ENCODE measurements at regions of chr20 and their contacts with region 1.

Region 1: DNA sequence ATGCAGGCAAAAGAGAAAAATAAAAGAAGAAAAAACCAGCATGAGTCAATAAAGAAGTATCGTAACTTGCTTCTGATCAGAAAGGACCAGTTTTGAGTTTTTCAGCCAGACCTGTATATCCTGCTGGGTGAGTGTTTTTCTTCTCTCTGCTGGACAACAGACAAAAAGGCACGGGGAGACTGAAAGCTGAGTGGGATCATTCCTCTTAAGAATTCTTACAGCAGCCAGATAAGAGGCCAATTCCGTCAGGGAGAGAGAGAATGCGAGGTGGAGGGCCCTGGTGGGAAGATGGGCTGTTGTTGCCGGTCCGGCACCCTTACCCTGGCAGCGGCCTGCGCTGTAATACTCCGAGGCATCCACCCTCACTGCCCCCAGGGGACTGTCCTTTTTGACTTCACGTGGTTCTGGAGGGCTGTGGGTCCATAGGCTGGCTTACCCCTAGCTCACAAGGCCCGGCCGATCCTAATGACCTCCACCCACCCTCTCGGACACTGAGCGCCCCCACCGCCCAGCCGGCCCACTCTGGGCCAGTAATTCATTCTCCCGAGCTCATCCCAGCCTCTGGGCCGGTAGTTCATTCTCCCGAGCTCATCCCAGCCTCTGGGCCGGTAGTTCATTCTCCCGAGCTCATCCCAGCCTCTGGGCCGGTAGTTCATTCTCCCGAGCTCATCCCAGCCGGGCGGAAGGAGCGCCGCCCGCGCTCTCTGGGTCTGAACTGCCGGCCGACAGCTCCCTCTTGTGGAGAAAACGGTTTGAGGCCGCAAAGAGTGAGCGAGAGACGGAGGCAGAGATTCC is 118.3 kb upstream of the SIRPA start:
- DNase-seq: peak; percentile 13
- ATAC-seq: peak; percentile 97
- H3K4me3 ChIP-seq: peak overlapping the region; percentile 69; the same call in 1 of the 2 replicates
- H3K27ac ChIP-seq: no peak overlapping the region
- H3K4me1 ChIP-seq: no peaks in the 10 kb centered on the region
- H3K27me3 ChIP-seq: peaks cover 0 to 2% of the 10 kb centered on the region in 2 experiments; a peak in 1 of 4 replicates
- CTCF ChIP-seq: peak; percentile 71 to 80 (median 74)
- EP300 ChIP-seq: no peak
- POLR2A ChIP-seq: no peak
- RAD21 ChIP-seq: peak; percentile 87

Region 2: GRCh38 chr20:1503564-1504227 is 273.2 kb before region 1 on chr20:
- CTCF ChIA-PET with region 1: interaction called, 66 read pairs
- POLR2A ChIA-PET with region 1: interaction called, 3 read pairs
- RAD21 ChIA-PET with region 1: interaction called, 38 read pairs
- SMC1A ChIA-PET with region 1: interaction called, 22 read pairs
- in situ Hi-C with region 1: no loop called
- intact Hi-C with region 1: no loop called
- DNase-seq: peak; percentile 76
- ATAC-seq: peak; percentile 100
- H3K4me3 ChIP-seq: no peak overlapping the region
- H3K27ac ChIP-seq: no peak overlapping the region
- H3K4me1 ChIP-seq: no peaks in the 10 kb centered on the region
- H3K27me3 ChIP-seq: peaks cover 0 to 7% of the 10 kb centered on the region in 2 experiments; a peak in 1 of 4 replicates
- CTCF ChIP-seq: peak; percentile 98 to 100 (median 100); a peak in 5 of 6 replicates
- EP300 ChIP-seq: no peak
- POLR2A ChIP-seq: no peak
- RAD21 ChIP-seq: peak; percentile 86

Region 3: DNA sequence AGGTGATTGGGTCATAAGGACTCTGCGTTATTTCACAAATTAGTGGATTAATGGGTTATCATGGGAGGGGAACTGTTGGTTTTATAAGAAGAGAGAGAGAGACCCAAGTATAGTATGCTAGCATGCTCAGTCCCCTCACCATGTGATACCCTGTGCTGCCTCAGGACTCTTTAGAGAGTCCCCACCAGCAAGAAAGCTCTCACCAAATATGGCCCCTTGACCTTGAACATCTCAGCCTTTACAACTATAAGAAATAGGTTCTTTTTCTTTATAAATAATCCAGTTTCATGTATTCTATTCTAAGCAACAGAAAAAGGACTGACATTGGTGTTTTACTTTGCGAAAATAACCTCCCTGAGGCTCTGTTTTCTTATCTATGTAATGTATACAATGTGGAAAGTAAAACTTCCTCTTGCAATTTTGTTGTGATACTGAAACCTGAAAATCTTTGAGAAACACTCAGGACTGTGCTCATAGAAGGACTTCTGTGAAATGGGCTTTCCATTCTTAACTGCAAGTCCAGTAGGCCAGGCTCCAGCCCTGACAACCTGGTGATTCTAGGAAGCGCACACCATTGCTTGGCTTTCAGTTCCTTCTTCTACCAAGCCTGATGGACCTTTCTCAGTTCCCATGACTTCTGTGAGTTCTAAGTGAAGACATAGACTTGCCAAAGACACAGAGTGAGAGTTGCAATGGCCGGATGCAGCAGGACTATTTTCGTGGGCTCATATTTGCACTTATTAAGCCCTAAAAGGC is 241.3 kb before region 1 on chr20:
- CTCF ChIA-PET with region 1: interaction called, 23 read pairs
- POLR2A ChIA-PET with region 1: no interaction called
- RAD21 ChIA-PET with region 1: interaction called, 12 read pairs
- SMC1A ChIA-PET with region 1: interaction called, 17 read pairs
- in situ Hi-C with region 1: no loop called
- intact Hi-C with region 1: no loop called
- DNase-seq: peak; percentile 96
- ATAC-seq: peak; percentile 87
- H3K4me3 ChIP-seq: no peak overlapping the region
- H3K27ac ChIP-seq: peak overlapping the region; percentile 40
- H3K4me1 ChIP-seq: peaks cover 38% of the 10 kb centered on the region
- H3K27me3 ChIP-seq: peaks cover 0 to 1% of the 10 kb centered on the region in 2 experiments; a peak in 1 of 4 replicates
- CTCF ChIP-seq: no peak
- EP300 ChIP-seq: peak in 1 of 2 experiments; percentile 86; a peak in 2 of 4 replicates
- POLR2A ChIP-seq: no peak
- RAD21 ChIP-seq: no peak

Region 4: DNA sequence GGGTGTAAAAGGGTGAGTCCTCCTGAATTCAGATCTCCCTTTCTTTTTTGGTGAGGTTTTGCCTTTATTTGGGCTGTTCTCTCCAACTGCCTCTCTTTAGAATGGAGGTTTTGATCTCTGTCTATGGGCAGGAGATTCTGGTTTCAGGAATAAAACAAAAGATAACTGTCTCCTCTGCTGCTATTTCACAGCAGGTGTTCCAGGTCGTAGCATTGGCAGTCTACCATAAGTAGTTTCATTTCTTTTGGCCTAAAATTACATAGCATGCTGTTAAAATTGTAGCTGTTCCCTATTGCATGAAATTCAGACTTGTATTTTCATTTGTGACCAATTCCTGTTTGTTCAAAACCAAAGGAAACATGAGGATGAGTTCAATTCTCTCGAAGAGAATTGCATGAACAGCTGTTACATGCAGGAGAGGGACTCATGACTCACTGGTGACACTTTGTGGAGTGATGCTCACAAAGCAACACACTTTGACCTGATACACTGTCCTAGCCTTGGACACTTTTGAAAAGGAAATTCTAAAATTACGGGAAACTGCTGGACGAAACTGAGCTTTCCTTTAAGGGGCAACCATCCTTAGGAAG is 42.5 kb before region 1 on chr20:
- CTCF ChIA-PET with region 1: interaction called, 12 read pairs
- POLR2A ChIA-PET with region 1: no interaction called
- RAD21 ChIA-PET with region 1: interaction called, 12 read pairs
- SMC1A ChIA-PET with region 1: interaction called, 16 read pairs
- in situ Hi-C with region 1: no loop called
- intact Hi-C with region 1: no loop called
- DNase-seq: no peak
- ATAC-seq: peak; percentile 91
- H3K4me3 ChIP-seq: no peak overlapping the region
- H3K27ac ChIP-seq: no peak overlapping the region; the same call in 1 of the 2 replicates
- H3K4me1 ChIP-seq: peaks cover 16% of the 10 kb centered on the region
- H3K27me3 ChIP-seq: no peaks in the 10 kb centered on the region
- CTCF ChIP-seq: peak; percentile 48 to 69 (median 60); a peak in 5 of 6 replicates
- EP300 ChIP-seq: no peak
- POLR2A ChIP-seq: no peak
- RAD21 ChIP-seq: peak; percentile 97

Region 5: GRCh38 chr20:1757072-1757471 is 19.8 kb before region 1 on chr20:
- CTCF ChIA-PET with region 1: interaction called, 27 read pairs
- POLR2A ChIA-PET with region 1: no interaction called
- RAD21 ChIA-PET with region 1: interaction called, 3 read pairs
- SMC1A ChIA-PET with region 1: interaction called, 11 read pairs
- in situ Hi-C with region 1: no loop called
- intact Hi-C with region 1: no loop called
- DNase-seq: no peak
- ATAC-seq: no peak
- H3K4me3 ChIP-seq: no peak overlapping the region
- H3K27ac ChIP-seq: no peak overlapping the region
- H3K4me1 ChIP-seq: no peaks in the 10 kb centered on the region
- H3K27me3 ChIP-seq: peaks cover 0 to 7% of the 10 kb centered on the region in 2 experiments; a peak in 2 of 4 replicates
- CTCF ChIP-seq: no peak
- EP300 ChIP-seq: no peak
- POLR2A ChIP-seq: no peak
- RAD21 ChIP-seq: no peak

Region 6: GRCh38 chr20:1792274-1792673 is 15.4 kb after region 1 on chr20:
- CTCF ChIA-PET with region 1: interaction called, 13 read pairs
- POLR2A ChIA-PET with region 1: no interaction called
- RAD21 ChIA-PET with region 1: interaction called, 5 read pairs
- SMC1A ChIA-PET with region 1: interaction called, 4 read pairs
- in situ Hi-C with region 1: no loop called
- intact Hi-C with region 1: no loop called
- DNase-seq: no peak
- ATAC-seq: no peak
- H3K4me3 ChIP-seq: no peak overlapping the region
- H3K27ac ChIP-seq: no peak overlapping the region
- H3K4me1 ChIP-seq: no peaks in the 10 kb centered on the region
- H3K27me3 ChIP-seq: peaks cover 2 to 5% of the 10 kb centered on the region in 2 experiments; a peak in 1 of 4 replicates
- CTCF ChIP-seq: no peak
- EP300 ChIP-seq: no peak
- POLR2A ChIP-seq: no peak
- RAD21 ChIP-seq: no peak

Measured in GM12878 (cell line).